MCF 10A (cell line): ENCODE measurements at regions of chr1 and their contacts with region 1.

Region 1: DNA sequence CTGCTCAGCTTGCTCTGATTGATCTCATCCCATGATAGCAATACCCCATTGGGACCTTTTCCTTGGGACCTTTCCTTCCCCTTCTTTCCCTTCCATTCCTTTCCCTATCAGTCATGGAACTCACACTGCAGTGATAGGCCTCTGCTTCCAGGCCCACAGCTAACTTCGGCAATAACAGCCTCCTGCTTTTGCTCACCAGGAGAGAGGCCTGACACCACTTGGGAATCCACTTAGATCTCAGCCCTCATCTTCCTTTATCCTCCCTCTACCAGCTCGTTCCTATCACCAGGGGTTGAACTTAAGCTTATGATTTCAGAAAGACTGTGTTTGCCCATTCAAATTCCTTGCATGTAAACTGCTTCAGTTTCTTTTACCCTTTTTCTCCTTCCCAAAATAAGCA is 11.0 kb upstream of the TIPRL start:
- DNase-seq: no peak
- H3K4me3 Mint-ChIP-seq: no peak overlapping the region
- H3K27ac Mint-ChIP-seq: no peak overlapping the region
- H3K4me1 Mint-ChIP-seq: no peaks in the 10 kb centered on the region
- H3K27me3 Mint-ChIP-seq: no peaks in the 10 kb centered on the region
- CTCF ChIP-seq: no peak

Region 2: GRCh38 chr1:167936068-167936929 is 231.5 kb before region 1 on chr1 and contains the start of gene DCAF6:
- CTCF ChIA-PET with region 1: no interaction called
- POLR2A ChIA-PET with region 1: no interaction called
- intact Hi-C with region 1: no loop called
- DNase-seq: peak; percentile 100
- H3K4me3 Mint-ChIP-seq: peak within 1 kb of the TSS; percentile 81
- H3K27ac Mint-ChIP-seq: peak within 1 kb of the TSS; percentile 85
- H3K4me1 Mint-ChIP-seq: peaks cover 18% of the 10 kb centered on the region
- H3K27me3 Mint-ChIP-seq: no peaks in the 10 kb centered on the region
- CTCF ChIP-seq: no peak
- total RNA-seq, gene DCAF6: 57.2 and 60.8 TPM in 2 replicates

Region 3: GRCh38 chr1:167984886-167985489 is 182.8 kb before region 1 on chr1:
- CTCF ChIA-PET with region 1: no interaction called
- POLR2A ChIA-PET with region 1: no interaction called
- intact Hi-C with region 1: no loop called
- DNase-seq: no peak
- H3K4me3 Mint-ChIP-seq: no peak overlapping the region
- H3K27ac Mint-ChIP-seq: peak overlapping the region; percentile 89
- H3K4me1 Mint-ChIP-seq: peaks cover 10% of the 10 kb centered on the region
- H3K27me3 Mint-ChIP-seq: no peaks in the 10 kb centered on the region
- CTCF ChIP-seq: no peak

Region 4: DNA sequence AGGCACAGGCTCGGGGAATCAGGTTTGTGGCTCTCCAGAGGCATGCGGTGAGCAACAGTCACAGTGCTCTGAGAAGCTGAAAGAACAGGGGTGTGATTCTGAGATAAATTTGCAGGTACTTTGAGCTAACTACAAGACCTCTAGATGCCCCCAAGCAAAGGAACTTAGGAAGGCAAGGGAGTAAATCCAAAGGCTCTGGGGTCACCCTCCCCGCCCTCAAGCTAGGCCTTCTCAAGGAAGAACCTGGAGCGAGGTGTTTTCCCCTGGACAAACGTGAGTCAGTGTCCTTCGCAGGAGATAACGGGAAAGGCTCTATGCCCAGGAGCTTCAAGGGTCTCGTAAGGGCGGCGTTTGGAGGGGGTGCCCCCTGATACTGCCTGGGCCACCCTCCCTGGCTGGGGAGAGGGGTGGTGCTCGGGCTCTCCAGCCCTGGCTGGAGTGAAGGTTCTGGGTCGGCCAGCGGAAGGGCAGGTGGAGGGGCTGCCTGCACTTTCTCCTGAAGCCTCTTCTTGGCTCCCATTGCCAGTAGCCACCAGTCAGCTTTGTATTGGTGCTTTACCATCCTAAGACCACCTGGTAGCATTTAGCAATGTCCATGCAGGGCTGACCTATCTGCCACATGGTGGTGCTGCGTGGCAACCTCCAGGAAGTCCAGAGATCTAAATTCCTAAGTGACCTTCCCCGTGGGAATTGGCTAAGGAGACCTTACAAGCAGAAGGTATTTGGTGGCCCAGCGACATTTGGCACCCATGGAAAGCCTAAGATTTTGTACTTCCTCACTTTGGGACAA is 75.0 kb before region 1 on chr1:
- CTCF ChIA-PET with region 1: interaction called, 11 read pairs
- POLR2A ChIA-PET with region 1: interaction called, 3 read pairs
- intact Hi-C with region 1: no loop called
- DNase-seq: peak; percentile 57
- H3K4me3 Mint-ChIP-seq: no peak overlapping the region
- H3K27ac Mint-ChIP-seq: no peak overlapping the region
- H3K4me1 Mint-ChIP-seq: peaks cover 4% of the 10 kb centered on the region
- H3K27me3 Mint-ChIP-seq: no peaks in the 10 kb centered on the region
- CTCF ChIP-seq: peak; percentile 61

Region 5: GRCh38 chr1:168195199-168196135 is 27.7 kb after region 1 on chr1:
- CTCF ChIA-PET with region 1: no interaction called
- POLR2A ChIA-PET with region 1: no interaction called
- intact Hi-C with region 1: no loop called
- DNase-seq: no peak
- H3K4me3 Mint-ChIP-seq: no peak overlapping the region
- H3K27ac Mint-ChIP-seq: no peak overlapping the region
- H3K4me1 Mint-ChIP-seq: peaks cover 8% of the 10 kb centered on the region
- H3K27me3 Mint-ChIP-seq: no peaks in the 10 kb centered on the region
- CTCF ChIP-seq: no peak

Region 6: DNA sequence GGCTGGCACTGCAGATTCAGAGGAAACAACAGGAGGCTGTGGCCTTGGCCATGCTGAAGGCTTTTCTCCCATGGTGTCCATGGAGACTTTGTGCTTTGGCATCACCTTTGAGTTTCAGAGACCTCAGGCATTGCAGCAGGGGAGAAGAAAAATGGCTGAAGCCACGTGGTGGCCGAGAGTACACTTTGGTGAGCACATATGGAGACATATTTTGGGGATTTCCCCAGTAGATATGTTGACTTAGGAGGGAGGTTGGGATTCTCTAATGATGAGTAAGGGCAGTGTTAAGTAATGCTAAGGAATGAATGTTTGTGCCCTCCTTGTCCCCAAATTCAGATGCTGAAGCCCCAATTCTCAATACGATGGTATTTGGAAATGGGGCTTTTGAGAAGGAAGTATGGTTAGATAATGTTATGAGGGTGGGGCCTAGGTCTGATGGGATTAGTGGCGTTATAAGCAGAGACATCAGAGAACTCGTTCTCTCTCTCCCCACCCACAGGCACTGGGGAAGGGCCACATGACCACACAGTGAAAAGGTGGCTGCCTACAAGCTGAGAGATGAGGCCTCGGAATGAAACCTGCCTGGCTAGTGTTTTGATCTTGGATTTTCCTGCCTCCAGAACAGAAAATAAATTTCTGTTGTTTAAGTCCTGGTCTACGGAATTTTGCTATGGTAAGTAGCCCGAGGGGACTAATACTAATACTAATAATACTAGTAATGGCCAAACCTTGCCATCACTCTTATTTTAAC is 211.5 kb after region 1 on chr1:
- CTCF ChIA-PET with region 1: no interaction called
- POLR2A ChIA-PET with region 1: no interaction called
- intact Hi-C with region 1: no loop called
- DNase-seq: peak; percentile 73
- H3K4me3 Mint-ChIP-seq: no peak overlapping the region
- H3K27ac Mint-ChIP-seq: no peak overlapping the region
- H3K4me1 Mint-ChIP-seq: peaks cover 7% of the 10 kb centered on the region
- H3K27me3 Mint-ChIP-seq: no peaks in the 10 kb centered on the region
- CTCF ChIP-seq: no peak